ENCODE measurements at regions of chr9 and their contacts with region 1.

Region 1: GRCh38 chr9:128818099-128818838 is at the start of gene ENDOG:
- DNase-seq: peak; percentile 95 to 97
- ATAC-seq: peak; percentile 91 to 92
- H3K4me3 ChIP-seq: peak within 1 kb of the TSS; percentile 64 to 87 (median 72)
- H3K27ac ChIP-seq: peak within 1 kb of the TSS; percentile 81 to 96 (median 92)
- H3K4me1 ChIP-seq: peaks cover 4 to 12% of the 10 kb centered on the region in 2 donors
- H3K27me3 ChIP-seq: no peaks in the 10 kb centered on the region
- CTCF ChIP-seq: peak; percentile 97 to 99 (median 98)
- POLR2A ChIP-seq: peak; percentile 87 to 97
- total RNA-seq, gene ENDOG: 58.2 to 212 (median 122) TPM

Region 2: GRCh38 chr9:128322404-128323211 is 495.7 kb before region 1 on chr9 and contains the starts of genes COQ4 and TRUB2:
- in situ Hi-C with region 1: no loop called
- intact Hi-C with region 1: no loop called
- DNase-seq: peak; percentile 91 to 92
- ATAC-seq: peak; percentile 99
- H3K4me3 ChIP-seq: peak within 1 kb of the TSS; percentile 75 to 97 (median 94)
- H3K27ac ChIP-seq: peak within 1 kb of the TSS; percentile 83 to 95 (median 92)
- H3K4me1 ChIP-seq: peaks cover 16 to 35% of the 10 kb centered on the region in 2 donors
- H3K27me3 ChIP-seq: no peaks in the 10 kb centered on the region
- CTCF ChIP-seq: peak in 1 of 5 experiments; percentile 18
- POLR2A ChIP-seq: no peak
- total RNA-seq, gene COQ4: 25.1 to 42.4 (median 34.3) TPM
- total RNA-seq, gene TRUB2: 7.1 to 18.1 (median 14.3) TPM

Region 3: DNA sequence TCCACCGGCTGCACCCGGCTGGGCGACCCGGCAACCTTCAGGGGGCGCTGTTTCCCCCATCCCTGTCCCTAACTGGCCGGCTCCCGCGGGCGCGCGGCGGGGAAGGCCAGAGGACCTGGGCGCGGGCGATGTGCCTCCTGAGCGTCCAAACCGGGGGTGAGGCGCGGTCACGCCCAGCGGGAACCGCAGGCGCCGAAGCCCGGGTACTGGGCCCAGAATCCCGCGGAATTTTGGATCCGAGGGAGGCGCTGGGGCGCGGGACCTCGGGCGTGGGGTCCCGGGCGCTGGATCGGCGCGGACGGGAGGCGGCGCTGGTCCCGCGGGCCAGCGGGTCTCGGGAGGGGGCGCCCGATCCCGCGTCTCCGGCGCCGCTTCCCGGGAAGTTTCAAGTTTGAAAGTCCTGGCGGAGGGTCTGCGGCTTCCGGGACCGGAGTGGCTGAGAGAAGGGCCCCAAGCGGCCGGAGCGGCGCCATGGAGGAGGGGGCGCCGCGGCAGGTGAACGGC is 115.8 kb before region 1 on chr9 and contains the start of gene PKN3:
- in situ Hi-C with region 1: no loop called
- intact Hi-C with region 1: loop called (anchors 1 kb)
- DNase-seq: peak; percentile 57 to 69
- ATAC-seq: peak; percentile 86 to 91
- H3K4me3 ChIP-seq: peak within 1 kb of the TSS; percentile 62 to 89 (median 76)
- H3K27ac ChIP-seq: peak within 1 kb of the TSS; percentile 69 to 79 (median 74)
- H3K4me1 ChIP-seq: peaks cover 0 to 11% of the 10 kb centered on the region in 2 donors
- H3K27me3 ChIP-seq: no peaks in the 10 kb centered on the region
- CTCF ChIP-seq: peak; percentile 66 to 91 (median 85)
- POLR2A ChIP-seq: no peak
- total RNA-seq, gene PKN3: 1.4 to 5.2 (median 3.3) TPM

Region 4: GRCh38 chr9:128786681-128787601 is 31.3 kb before region 1 on chr9 and contains the start of gene TBC1D13:
- in situ Hi-C with region 1: no loop called
- intact Hi-C with region 1: loop called (anchors 1 kb)
- DNase-seq: peak; percentile 88 to 91
- ATAC-seq: peak; percentile 89 to 93
- H3K4me3 ChIP-seq: peak within 1 kb of the TSS; percentile 81 to 99 (median 90)
- H3K27ac ChIP-seq: peak within 1 kb of the TSS; percentile 89 to 96 (median 90)
- H3K4me1 ChIP-seq: peaks cover 16 to 25% of the 10 kb centered on the region in 2 donors
- H3K27me3 ChIP-seq: no peaks in the 10 kb centered on the region
- CTCF ChIP-seq: no peak
- POLR2A ChIP-seq: peak; percentile 76 to 77
- total RNA-seq, gene TBC1D13: 7.8 to 14.3 (median 11.3) TPM

Region 5: DNA sequence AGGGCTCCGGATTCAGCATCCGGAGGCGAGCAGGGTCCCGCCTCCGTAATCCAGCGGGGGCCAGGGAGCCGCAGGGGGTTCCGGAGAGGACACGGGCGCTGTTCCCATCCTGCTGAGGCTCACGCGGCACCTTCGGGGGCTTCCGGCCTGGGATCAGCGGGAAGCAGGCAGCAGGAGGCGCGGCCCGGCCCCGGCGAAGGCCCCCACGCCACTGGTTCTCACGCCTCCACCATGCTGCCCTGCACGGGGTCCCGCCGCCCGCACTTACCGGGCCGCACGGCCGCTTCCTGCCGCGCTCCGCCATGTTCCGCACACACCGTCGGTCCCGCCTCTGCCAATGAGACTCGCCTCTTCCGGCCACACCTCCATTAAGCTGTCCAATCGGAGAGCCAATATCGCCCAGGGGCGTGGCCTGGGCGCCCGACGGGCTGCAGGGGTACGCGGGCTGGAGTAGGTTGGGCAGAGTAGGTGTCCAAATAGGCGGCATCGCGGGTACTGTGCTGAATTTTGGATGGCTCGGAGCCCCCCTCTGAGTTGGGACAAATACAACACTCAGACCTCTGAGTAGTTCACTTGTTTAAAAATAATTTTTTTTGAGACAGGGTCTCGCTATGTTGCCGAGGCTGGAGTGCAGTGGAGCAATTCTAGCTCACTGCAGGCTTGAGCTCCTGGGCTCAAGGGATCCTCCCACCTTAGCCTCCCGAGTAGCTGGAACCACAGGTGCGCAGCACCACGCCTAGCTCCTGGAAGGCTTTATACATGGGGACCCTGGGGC is 11.4 kb after region 1 on chr9 and contains the start of gene SPOUT1:
- in situ Hi-C with region 1: no loop called
- intact Hi-C with region 1: loop called (anchors 1 kb)
- DNase-seq: peak; percentile 87 to 91
- ATAC-seq: peak; percentile 99
- H3K4me3 ChIP-seq: peak within 1 kb of the TSS; percentile 73 to 97 (median 85)
- H3K27ac ChIP-seq: peak within 1 kb of the TSS; percentile 80 to 89 (median 82)
- H3K4me1 ChIP-seq: peaks cover 12 to 13% of the 10 kb centered on the region in 2 donors
- H3K27me3 ChIP-seq: no peaks in the 10 kb centered on the region
- CTCF ChIP-seq: no peak
- POLR2A ChIP-seq: peak; percentile 21 to 59
- total RNA-seq, gene SPOUT1: 10.7 to 29.3 (median 14.9) TPM